Activated CD4-positive, alpha-beta T cell treated with anti-CD3 and anti-CD28 coated beads for 36 hours (primary cell): ENCODE measurements at regions of chr3 and their contacts with region 1.

Region 1: DNA sequence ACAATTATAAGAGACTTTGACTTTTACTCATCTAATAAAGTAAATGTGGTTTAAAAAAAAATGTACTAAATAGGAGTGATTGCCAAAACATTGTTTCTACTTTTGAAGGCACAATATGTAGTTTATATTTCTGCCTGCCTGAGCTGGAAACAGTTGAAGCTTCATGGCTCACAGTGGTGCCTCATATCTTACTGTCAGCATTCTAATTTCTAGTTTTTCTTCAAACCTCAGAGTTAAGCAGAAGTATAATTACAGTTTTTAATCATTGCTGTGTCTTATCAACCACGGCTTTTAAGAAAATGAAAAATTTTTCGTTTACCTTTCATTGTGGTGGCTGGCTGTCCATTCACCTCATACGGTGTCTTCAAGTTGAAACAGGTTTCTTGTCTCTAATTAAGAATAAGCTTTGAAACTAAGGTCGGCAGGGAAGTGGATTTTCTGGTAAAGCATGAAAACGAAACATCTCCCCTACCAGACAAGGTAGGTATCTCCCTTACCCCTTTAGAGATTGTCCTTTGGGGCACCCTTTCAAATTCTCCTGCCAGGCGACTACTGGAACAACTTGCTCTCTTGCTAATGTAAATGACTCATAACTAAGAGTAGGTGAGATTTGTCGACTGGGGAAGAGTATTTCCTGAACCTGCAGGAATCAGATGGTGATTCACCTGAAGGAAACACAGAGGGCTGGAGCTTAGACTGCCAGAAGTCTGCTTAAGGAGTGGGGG is at the start of gene GPR87:
- DNase-seq: peak; percentile 50
- ATAC-seq: peak; percentile 83
- H3K4me3 Mint-ChIP-seq: peak within 1 kb of the TSS; percentile 50
- H3K27ac Mint-ChIP-seq: peak within 1 kb of the TSS; percentile 90
- H3K4me1 Mint-ChIP-seq: peaks cover 47% of the 10 kb centered on the region
- H3K27me3 Mint-ChIP-seq: peaks cover 2% of the 10 kb centered on the region
- total RNA-seq, gene GPR87: 2.3 to 2.5 TPM

Region 2: DNA sequence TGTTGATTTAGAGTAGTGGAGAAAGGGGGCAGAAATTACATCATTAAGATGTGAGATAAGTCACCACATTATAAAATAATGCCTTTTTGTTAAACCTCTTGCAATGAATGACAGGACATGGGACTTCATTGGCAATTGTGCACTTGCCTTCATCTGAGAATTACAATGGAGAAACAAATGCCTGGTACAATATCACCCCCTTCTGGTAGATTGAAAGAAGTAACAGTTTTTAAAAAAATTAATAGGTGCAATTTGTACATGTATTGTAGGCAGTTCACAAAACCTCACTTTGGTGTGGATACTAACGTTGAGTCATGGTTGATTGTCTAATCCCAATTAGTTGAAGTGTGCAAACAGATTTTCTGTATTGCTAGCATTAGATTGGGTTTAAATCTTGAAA is 33.5 kb before region 1 on chr3:
- CTCF ChIA-PET with region 1: no interaction called
- POLR2A ChIA-PET with region 1: no interaction called
- intact Hi-C with region 1: loop called (anchors 1 to 2 kb)
- DNase-seq: no peak
- ATAC-seq: peak; percentile 57
- H3K4me3 Mint-ChIP-seq: no peak overlapping the region
- H3K27ac Mint-ChIP-seq: no peak overlapping the region
- H3K4me1 Mint-ChIP-seq: peaks cover 29% of the 10 kb centered on the region
- H3K27me3 Mint-ChIP-seq: no peaks in the 10 kb centered on the region

Region 3: DNA sequence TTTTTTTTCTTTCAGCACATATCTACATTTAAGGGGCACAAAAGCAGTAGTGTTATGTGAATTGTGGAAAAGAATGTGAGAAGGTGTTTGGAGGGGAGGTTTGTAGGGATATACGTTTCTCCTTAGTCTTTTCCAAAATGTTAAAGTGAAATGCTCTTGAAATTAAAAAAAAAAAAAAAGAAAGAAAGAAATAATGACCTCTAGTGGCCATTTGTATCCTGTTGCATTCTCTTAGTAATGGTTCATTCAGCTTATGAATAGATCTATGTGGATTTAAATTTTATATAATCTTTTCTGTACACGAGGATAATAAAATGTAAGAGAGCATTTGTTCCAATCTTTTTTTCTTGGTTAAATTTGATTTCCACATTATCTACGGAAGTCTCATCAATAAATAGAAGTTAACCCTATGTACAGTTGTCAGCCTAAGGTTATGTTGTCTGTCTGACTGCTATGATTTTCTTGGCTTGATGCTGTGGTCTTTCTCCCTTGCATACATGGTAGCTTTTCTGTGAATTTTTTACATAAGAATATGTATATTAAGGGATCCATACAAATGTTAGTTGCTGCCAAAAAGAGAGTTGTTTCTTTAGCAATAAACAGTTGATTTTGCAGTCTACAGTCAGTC is 11.3 kb after region 1 on chr3:
- CTCF ChIA-PET with region 1: interaction called, 15 read pairs
- POLR2A ChIA-PET with region 1: interaction called, 3 read pairs
- intact Hi-C with region 1: no loop called
- DNase-seq: no peak
- ATAC-seq: peak; percentile 17
- H3K4me3 Mint-ChIP-seq: no peak overlapping the region
- H3K27ac Mint-ChIP-seq: no peak overlapping the region
- H3K4me1 Mint-ChIP-seq: peaks cover 25% of the 10 kb centered on the region
- H3K27me3 Mint-ChIP-seq: peaks cover 10% of the 10 kb centered on the region

Region 4: DNA sequence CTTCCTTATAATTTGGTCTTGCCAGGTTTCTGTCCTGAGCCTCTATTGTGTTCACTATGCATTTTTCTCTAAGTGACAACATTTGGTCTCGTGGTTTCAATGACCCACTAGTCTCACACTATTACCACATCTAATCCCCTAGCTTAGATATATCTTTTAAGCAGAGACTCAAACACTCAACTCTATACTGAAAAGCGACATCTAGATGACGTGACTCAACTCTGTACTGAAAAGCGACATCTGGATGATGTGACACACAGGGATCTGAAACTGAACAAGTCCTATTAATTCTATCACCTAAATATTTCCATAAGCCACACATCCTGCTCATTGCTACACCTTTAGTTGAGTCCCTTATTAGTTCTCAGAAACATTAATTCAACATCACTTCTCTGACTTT is 810.6 kb after region 1 on chr3:
- CTCF ChIA-PET with region 1: no interaction called
- POLR2A ChIA-PET with region 1: no interaction called
- intact Hi-C with region 1: loop called in 1 of 2 experiments (anchors 5 kb)
- DNase-seq: peak; percentile 33
- ATAC-seq: peak; percentile 95
- H3K4me3 Mint-ChIP-seq: peak overlapping the region; percentile 27
- H3K27ac Mint-ChIP-seq: peak overlapping the region; percentile 51
- H3K4me1 Mint-ChIP-seq: peaks cover 26% of the 10 kb centered on the region
- H3K27me3 Mint-ChIP-seq: no peaks in the 10 kb centered on the region

Region 5: DNA sequence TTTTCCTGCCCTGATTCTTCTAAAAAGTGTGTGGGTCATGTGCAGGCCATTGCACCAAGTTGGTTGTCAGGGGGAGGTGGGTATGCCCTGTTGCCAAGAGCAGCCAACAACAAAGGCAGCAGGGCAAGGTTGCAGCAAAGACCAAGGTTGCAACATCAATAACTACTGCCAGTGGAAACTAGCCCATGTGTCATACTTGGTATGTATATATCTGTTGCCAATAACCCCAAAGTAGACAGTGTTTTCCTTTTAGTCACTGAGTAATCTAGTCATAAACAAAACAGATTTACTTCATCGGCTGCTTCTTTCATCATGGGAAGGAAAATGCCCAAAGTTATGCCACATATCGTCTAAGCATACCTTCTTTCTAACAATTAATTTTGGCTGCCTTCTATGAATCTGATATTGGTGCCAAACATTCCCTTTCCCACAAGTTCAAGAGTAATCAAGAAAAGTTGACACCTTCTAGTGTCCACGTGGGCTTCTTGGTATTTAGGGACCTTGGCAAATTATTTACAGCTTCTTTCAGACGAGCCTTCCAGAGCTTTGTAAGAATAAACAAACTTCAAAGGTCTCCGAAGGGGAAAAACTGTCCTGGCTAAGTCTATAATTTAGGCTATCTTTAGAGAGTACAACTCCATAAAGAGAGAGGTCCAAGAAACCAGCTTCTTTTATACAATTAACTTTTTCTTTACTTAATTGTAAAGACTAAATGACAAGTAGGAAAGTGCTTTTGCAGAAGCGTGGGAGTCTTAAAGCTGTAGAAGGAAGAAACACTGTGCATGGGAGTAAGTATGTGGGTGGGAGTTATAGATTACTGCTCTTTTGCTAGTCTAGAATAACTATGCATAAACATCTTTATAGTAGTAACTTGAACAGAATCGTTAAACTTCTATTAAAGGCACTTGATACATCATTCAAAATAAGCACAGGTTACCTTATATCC is 942.3 kb after region 1 on chr3:
- CTCF ChIA-PET with region 1: no interaction called
- POLR2A ChIA-PET with region 1: no interaction called
- intact Hi-C with region 1: loop called in 1 of 2 experiments (anchors 5 kb)
- DNase-seq: peak; percentile 82
- ATAC-seq: peak; percentile 81
- H3K4me3 Mint-ChIP-seq: peak overlapping the region; percentile 61
- H3K27ac Mint-ChIP-seq: peak overlapping the region; percentile 91
- H3K4me1 Mint-ChIP-seq: peaks cover 90% of the 10 kb centered on the region
- H3K27me3 Mint-ChIP-seq: no peaks in the 10 kb centered on the region